Thyroid gland (tissue), 4 donors: ENCODE measurements at regions of chr15 and their contacts with region 1.

Region 1: DNA sequence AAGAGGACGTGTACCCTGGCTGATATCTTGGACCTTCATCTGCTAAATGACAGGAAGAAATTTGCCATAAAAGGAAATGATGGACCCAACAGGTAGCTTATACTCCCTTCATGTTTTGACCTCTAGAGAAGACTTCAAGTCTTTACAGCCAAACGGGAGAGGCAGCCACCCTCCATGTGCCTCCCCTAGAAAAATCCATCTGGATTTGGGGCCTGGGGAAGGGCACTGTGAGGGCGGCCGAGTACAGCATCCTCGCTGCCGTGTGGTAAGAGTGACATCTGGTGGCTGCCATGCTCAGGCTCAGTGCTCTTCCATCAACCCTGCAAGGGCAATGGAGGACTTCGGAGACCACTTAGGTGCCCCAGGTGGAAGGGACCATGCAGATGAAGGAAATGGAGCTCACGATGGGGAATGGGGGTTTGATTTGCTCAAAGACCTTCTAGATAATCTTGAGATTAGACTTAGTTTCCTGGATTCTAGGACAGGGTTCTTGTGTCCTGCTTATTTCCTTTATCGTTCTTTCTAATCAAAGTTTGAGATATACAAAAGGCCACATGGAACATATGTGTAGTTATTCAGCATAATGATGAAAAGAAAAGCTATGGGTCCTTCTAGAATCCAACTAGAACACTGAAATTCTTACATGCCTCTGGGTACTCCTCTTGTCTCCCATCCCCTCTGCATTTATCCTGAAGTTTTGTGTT is 44.4 kb downstream of the AQP9 start:
- DNase-seq: peak; percentile 43 to 48
- H3K4me3 ChIP-seq: no peak overlapping the region
- H3K27ac ChIP-seq: no peak overlapping the region
- H3K4me1 ChIP-seq: no peaks in the 10 kb centered on the region
- H3K27me3 ChIP-seq: no peaks in the 10 kb centered on the region
- CTCF ChIP-seq: peak; percentile 33 to 89 (median 78)
- POLR2A ChIP-seq: no peak

Region 2: DNA sequence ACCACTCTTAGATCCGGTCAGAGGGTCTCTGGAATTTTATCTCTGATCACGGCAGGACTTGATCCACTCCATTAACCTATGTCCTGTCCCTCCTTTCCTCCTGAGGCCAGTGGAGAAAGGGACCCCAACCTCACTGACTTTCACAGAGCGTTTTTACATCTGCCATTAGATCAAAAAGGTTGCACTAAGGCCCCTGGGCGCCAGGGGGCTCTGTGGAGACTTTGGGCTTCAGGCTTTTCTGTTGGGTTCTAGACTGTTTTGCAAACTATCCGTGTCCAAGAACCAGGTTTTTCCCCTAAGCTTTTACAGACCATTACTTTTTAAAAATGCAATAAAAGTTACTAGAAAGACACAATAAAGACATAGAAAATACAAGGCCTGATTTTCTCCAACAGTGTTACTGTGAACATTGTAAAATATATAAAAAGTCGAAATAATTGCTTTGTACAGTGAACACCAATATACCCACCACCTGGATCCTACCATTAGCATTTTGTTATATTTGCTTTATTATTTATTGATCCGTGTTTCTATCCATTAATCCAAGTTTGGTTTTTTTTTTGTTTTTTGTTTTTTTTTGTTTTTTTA is 316.4 kb before region 1 on chr15:
- intact Hi-C with region 1: loop called (anchors 10 kb)
- DNase-seq: peak; percentile 63 to 73
- H3K4me3 ChIP-seq: no peak overlapping the region
- H3K27ac ChIP-seq: no peak overlapping the region
- H3K4me1 ChIP-seq: no peaks in the 10 kb centered on the region
- H3K27me3 ChIP-seq: no peaks in the 10 kb centered on the region
- CTCF ChIP-seq: peak; percentile 32 to 81 (median 62)
- POLR2A ChIP-seq: no peak

Region 3: GRCh38 chr15:58010983-58011382 is 171.6 kb before region 1 on chr15:
- intact Hi-C with region 1: no loop called
- DNase-seq: no peak
- H3K4me3 ChIP-seq: no peak overlapping the region
- H3K27ac ChIP-seq: no peak overlapping the region
- H3K4me1 ChIP-seq: no peaks in the 10 kb centered on the region
- H3K27me3 ChIP-seq: no peaks in the 10 kb centered on the region
- CTCF ChIP-seq: no peak
- POLR2A ChIP-seq: no peak

Region 4: GRCh38 chr15:58115692-58116091 is 66.9 kb before region 1 on chr15:
- intact Hi-C with region 1: loop called (anchors 5 kb)
- DNase-seq: no peak
- H3K4me3 ChIP-seq: no peak overlapping the region
- H3K27ac ChIP-seq: no peak overlapping the region
- H3K4me1 ChIP-seq: no peaks in the 10 kb centered on the region
- H3K27me3 ChIP-seq: no peaks in the 10 kb centered on the region
- CTCF ChIP-seq: peak in 4 of 6 experiments; percentile 21 to 45 (median 38)
- POLR2A ChIP-seq: no peak